ENCODE measurements at regions of chr19 and their contacts with region 1.

Region 1: DNA sequence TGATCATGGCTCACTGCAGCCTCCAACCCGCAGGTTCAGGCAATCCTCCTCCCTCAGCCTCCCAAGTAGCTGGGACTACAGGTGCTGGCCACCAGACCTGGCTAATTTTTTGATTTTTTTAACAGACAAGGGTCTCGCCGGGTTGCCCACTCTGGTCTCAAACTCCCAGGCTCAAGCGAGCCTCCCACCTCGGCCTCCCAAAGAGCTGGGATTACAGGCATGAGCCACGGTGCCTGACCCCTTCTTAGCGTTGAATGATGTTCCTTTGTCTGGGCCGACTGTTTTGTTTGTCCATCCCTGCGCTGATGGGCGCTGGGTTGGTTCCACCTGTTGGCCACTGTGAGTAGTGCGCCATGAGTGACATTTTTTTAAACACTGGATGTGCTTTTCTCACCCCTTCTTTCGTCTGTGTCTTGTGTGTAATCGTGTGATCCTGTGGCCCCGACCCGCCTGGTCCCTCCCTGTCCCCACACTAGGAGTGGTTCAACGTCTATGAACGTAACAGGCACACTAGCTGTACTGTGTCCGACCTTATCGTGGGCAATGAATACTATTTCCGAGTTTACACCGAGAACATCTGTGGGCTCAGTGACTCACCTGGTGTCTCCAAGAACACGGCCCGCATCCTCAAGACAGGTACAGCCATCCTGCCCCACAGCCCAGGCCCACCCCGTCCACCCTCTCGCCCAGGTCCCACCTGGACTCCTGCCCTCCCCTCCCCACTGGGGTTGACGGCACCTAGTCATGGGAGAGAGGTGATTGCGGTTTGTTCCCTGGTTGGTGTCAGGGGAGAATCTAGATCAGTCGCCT is 15.0 kb upstream of the EMC10 start:
- DNase-seq: peak; percentile 78
- H3K4me3 Mint-ChIP-seq: no peak overlapping the region
- H3K27ac Mint-ChIP-seq: no peak overlapping the region
- H3K4me1 Mint-ChIP-seq: peaks cover 15% of the 10 kb centered on the region
- H3K27me3 Mint-ChIP-seq: peaks cover 33% of the 10 kb centered on the region

Region 2: GRCh38 chr19:50252111-50252886 is 209.0 kb before region 1 on chr19:
- CTCF ChIA-PET with region 1: interaction called, 3 read pairs
- intact Hi-C with region 1: loop called (anchors 10 kb)
- DNase-seq: peak; percentile 54
- H3K4me3 Mint-ChIP-seq: no peak overlapping the region
- H3K27ac Mint-ChIP-seq: no peak overlapping the region
- H3K4me1 Mint-ChIP-seq: no peaks in the 10 kb centered on the region
- H3K27me3 Mint-ChIP-seq: peaks cover 25% of the 10 kb centered on the region

Region 3: GRCh38 chr19:50368649-50369570 is 92.4 kb before region 1 on chr19:
- CTCF ChIA-PET with region 1: interaction called, 11 read pairs
- intact Hi-C with region 1: loop called (anchors 1 kb)
- DNase-seq: peak; percentile 89
- H3K4me3 Mint-ChIP-seq: peak overlapping the region; percentile 88
- H3K27ac Mint-ChIP-seq: peak overlapping the region; percentile 88
- H3K4me1 Mint-ChIP-seq: peaks cover 35% of the 10 kb centered on the region
- H3K27me3 Mint-ChIP-seq: no peaks in the 10 kb centered on the region

Region 4: GRCh38 chr19:50500060-50500752 is 38.9 kb after region 1 on chr19:
- CTCF ChIA-PET with region 1: no interaction called
- intact Hi-C with region 1: no loop called
- DNase-seq: peak; percentile 22
- H3K4me3 Mint-ChIP-seq: no peak overlapping the region
- H3K27ac Mint-ChIP-seq: no peak overlapping the region
- H3K4me1 Mint-ChIP-seq: no peaks in the 10 kb centered on the region
- H3K27me3 Mint-ChIP-seq: no peaks in the 10 kb centered on the region